ENCODE measurements at regions of chr17 and their contacts with region 1.

Region 1: GRCh38 chr17:56358651-56359050 is 205.4 kb downstream of the ANKFN1 start:
- DNase-seq: no peak

Region 2: DNA sequence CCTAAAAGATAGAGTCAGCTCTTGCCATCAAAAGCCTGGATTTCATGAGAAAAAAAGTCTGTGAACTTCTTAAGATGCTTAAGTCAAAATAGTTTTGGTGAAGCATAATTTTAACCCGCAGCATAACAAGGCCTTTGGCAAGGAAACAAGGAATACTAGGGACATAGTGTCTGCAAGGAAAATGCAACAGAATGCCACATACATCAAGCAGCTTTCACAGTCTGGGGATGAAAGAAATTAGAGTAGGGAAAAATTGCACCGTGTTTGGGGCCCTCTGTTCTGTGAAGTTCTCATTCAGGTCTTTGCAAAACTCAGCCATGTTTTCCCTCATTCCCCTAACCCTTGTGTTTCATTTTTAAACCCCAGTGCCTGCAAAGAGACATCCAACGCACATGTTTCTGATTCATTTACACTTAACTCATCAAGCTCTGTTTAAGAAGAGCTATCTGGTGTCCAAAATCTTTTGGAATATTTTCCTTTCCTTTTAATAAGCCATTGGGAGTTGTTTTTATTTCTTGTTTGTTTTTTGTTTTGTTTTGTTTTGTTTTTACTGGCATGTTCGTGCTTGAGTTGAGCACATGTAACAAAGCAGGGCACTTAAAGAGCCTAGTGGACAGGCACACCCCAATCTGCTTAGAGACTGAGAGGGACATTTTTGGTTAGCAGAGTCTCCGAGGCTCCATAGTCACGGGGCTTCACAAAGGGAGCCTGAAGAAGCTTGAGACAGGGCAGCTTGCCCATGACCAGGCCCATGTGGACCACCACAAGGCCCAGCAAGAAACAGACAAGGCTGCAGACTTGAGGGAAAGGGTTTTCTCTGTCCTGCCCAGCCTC is 88.9 kb before region 1 on chr17:
- in situ Hi-C with region 1: loop called (anchors 25 kb)
- DNase-seq: no peak

Measured in KBM-7 (cell line).